ENCODE measurements at regions of chr11 and their contacts with region 1.

Region 1: DNA sequence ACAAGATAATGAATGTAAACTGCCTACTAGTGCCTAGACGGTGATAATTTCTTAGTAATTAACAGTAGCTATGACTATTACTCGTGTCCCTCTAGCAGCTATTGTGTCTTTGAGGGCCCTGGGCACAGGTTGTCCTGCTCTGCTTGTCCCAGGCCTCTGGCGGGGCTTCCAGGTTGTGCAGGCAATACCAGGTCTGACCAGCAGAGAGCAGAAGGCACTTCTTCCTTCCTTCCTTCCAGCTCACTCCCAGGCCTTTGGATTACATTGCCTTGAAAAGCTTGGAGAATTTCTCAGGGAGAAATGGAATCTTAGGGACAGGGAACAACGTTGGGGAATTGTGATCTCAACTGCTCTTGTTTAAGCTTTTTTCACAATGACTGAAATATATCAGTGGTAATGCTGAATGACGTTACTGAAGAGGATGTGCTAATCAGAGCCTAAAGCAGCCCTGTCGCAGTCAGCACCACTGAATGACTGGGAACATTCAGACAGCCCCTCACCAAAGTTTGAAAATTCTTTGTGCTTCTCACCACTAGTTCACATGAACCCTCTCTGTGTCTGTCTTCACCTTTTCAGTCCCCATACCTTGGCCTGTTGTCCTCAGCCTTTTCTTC is 8.4 kb upstream of the CCKBR start:
- DNase-seq: no peak
- H3K4me3 ChIP-seq: no peak overlapping the region
- CTCF ChIP-seq: peak; percentile 94

Region 2: DNA sequence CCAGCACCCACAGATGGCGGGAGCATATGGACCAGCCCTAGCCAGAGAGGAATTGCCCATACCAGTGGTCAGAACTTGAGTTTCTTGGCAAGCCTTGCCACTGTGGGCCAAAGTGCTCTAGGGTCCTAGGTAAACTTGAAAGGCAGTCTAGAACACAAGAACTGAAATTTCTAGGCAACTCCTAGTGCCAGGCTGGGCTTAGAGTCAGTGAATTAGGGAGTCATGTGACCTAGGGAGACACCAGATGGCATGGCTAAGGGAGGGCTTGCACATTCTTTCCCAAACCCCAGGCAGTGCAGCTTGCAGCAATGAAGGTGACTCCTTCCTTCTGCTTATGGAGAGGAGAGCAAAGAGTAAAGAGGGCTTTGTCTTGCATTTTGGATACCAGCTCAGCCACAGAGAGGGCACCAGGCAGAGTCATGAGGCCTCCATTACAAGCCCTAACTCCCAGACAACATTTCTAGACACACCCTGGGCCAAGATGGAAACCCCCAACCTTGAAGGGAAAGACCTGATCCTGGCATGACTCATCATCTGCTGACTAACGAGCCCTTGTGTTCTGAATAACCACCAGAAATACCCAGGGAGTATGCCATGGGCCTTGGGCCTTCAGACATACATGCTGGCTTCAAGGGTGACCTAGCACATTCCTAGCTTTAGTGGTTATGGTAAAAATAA is 328.3 kb before region 1 on chr11:
- CTCF ChIA-PET with region 1: no interaction called
- POLR2A ChIA-PET with region 1: no interaction called
- DNase-seq: no peak
- H3K4me3 ChIP-seq: no peak overlapping the region
- CTCF ChIP-seq: no peak

Region 3: DNA sequence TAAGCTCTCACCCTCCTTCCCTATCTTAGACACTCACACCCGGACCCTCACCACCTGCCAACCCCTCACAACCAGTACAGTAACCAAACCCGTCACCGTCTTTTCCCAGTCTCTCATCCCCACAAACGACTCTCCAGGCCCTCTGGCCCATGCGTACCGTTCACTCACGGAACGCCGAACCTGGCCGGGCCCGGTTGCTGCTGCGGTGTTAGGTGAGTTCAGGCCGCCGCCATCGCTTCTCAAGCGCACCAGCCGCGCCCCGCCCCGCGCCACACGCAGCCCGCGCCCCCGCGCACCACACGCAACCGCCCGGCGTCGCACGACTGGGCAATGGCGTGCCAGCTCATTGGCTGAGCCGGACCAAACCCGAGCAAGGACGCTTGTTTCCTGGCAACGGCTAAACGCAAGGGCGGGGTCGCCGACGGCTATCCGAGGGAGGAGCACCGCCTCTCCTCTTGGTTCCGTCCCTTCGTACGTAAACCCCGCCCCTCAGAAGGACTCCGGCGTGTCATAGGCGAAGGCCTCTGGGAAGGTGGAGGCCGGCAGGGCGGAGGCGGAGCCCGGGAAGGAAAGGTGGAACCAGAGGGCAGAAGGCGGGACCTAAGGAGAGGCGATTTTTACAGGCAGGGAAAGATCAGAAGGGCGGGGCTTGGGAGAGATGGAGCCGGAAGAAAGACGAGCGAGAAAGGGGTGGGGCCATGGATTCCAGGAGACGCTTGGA is 16.7 kb before region 1 on chr11 and contains the start of gene FHIP1B:
- CTCF ChIA-PET with region 1: interaction called, 50 read pairs
- POLR2A ChIA-PET with region 1: no interaction called
- DNase-seq: peak; percentile 98
- H3K4me3 ChIP-seq: peak within 1 kb of the TSS; percentile 98
- CTCF ChIP-seq: no peak

Region 4: GRCh38 chr11:6269994-6270393 is 18.8 kb after region 1 on chr11:
- CTCF ChIA-PET with region 1: interaction called, 14 read pairs
- POLR2A ChIA-PET with region 1: no interaction called
- DNase-seq: no peak
- H3K4me3 ChIP-seq: no peak overlapping the region
- CTCF ChIP-seq: no peak

Region 5: GRCh38 chr11:6307876-6308275 is 56.6 kb after region 1 on chr11:
- CTCF ChIA-PET with region 1: interaction called, 12 read pairs
- POLR2A ChIA-PET with region 1: no interaction called
- DNase-seq: no peak
- H3K4me3 ChIP-seq: no peak overlapping the region
- CTCF ChIP-seq: no peak

Region 6: DNA sequence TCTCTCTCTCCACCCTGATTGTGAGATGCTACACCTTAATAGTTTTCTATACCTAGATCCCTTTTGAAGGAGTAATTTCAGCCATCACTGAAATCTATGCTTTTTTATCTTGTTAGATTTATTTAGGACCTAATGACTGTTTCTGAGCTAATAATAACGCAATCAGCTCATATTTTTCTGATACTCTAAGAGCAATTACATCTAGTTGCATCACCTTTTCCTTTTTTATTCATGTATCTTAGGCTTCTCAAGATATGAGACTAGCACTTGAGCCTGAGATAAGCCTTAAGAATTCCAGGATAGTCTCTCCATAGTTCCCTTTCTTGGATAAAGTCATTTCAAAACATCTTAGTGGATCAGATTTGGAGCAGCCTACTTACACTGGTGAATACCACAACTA is 94.1 kb after region 1 on chr11:
- CTCF ChIA-PET with region 1: interaction called, 494 read pairs
- POLR2A ChIA-PET with region 1: no interaction called
- DNase-seq: no peak
- H3K4me3 ChIP-seq: no peak overlapping the region
- CTCF ChIP-seq: no peak